ENCODE measurements at regions of chr2 and their contacts with region 1.

Region 1: GRCh38 chr2:101717071-101717845 is 19.8 kb downstream of the MAP4K4 start:
- DNase-seq: peak; percentile 66
- H3K4me3 Mint-ChIP-seq: peak overlapping the region; percentile 38
- H3K27ac Mint-ChIP-seq: peak overlapping the region; percentile 79
- H3K4me1 Mint-ChIP-seq: peaks cover 66% of the 10 kb centered on the region
- H3K27me3 Mint-ChIP-seq: no peaks in the 10 kb centered on the region

Region 2: GRCh38 chr2:101473911-101474701 is 243.2 kb before region 1 on chr2:
- CTCF ChIA-PET with region 1: no interaction called
- POLR2A ChIA-PET with region 1: interaction called, 11 read pairs
- DNase-seq: peak; percentile 59
- H3K4me3 Mint-ChIP-seq: peak overlapping the region; percentile 79
- H3K27ac Mint-ChIP-seq: peak overlapping the region; percentile 93
- H3K4me1 Mint-ChIP-seq: peaks cover 40% of the 10 kb centered on the region
- H3K27me3 Mint-ChIP-seq: no peaks in the 10 kb centered on the region

Region 3: GRCh38 chr2:101697124-101698013 is 19.9 kb before region 1 on chr2 and contains the start of gene MAP4K4:
- CTCF ChIA-PET with region 1: interaction called, 11 read pairs
- POLR2A ChIA-PET with region 1: interaction called, 64 read pairs
- DNase-seq: peak; percentile 78
- H3K4me3 Mint-ChIP-seq: peak within 1 kb of the TSS; percentile 81
- H3K27ac Mint-ChIP-seq: peak within 1 kb of the TSS; percentile 75
- H3K4me1 Mint-ChIP-seq: peaks cover 18% of the 10 kb centered on the region
- H3K27me3 Mint-ChIP-seq: peaks cover 2% of the 10 kb centered on the region
- total RNA-seq, gene MAP4K4: 71.6 to 77.5 TPM

Region 4: DNA sequence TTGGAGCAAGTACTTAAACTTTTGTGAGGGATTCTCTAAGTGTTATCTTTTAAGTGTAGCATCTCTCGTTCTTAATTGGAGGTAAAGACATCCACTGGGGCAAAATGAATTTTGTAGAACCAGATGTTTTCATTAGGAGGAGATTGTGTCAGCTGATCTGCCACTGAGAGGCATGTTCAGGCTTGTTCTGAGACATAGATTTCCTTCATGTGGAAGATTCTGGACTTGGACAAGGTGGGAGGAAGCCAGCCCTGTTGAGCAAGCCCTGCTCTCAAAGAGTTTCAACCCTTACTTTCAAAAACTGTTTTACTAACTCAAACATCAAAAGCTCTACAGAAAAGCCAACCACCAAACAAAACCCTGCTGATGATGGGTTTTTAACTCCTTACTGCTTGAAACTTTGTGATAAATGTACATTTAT is 13.2 kb before region 1 on chr2:
- CTCF ChIA-PET with region 1: interaction called, 11 read pairs
- POLR2A ChIA-PET with region 1: interaction called, 64 read pairs
- DNase-seq: no peak
- H3K4me3 Mint-ChIP-seq: peak overlapping the region; percentile 71
- H3K27ac Mint-ChIP-seq: peak overlapping the region; percentile 84
- H3K4me1 Mint-ChIP-seq: peaks cover 67% of the 10 kb centered on the region
- H3K27me3 Mint-ChIP-seq: no peaks in the 10 kb centered on the region

Region 5: DNA sequence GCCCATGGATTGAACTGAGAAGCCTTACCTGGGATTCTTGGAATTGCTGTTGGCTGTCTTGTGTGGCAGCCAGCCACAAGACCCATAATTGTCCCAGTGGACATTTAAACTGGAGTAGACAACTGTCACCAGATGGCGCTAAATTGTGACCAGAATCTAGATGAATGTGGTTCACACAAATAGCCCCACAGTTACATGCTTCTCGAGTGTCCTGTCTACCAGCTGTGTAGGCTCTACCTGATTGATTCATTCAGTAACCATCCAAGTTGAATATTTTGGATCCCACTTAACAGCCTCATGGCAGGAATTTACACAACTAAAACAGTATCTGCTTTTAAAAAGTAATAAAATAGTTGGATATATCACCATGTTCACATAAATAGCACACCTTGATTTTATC is 53.5 kb after region 1 on chr2:
- CTCF ChIA-PET with region 1: no interaction called
- POLR2A ChIA-PET with region 1: interaction called, 15 read pairs
- DNase-seq: no peak
- H3K4me3 Mint-ChIP-seq: no peak overlapping the region
- H3K27ac Mint-ChIP-seq: no peak overlapping the region
- H3K4me1 Mint-ChIP-seq: peaks cover 54% of the 10 kb centered on the region
- H3K27me3 Mint-ChIP-seq: no peaks in the 10 kb centered on the region